PC-3 (cell line): ENCODE measurements at regions of chr6 and their contacts with region 1.

Region 1: GRCh38 chr6:83057705-83058321 is 7.8 kb downstream of the UBE3D start:
- DNase-seq: peak; percentile 67
- ATAC-seq: peak; percentile 68
- H3K4me3 ChIP-seq: no peak overlapping the region
- H3K27ac ChIP-seq: no peak overlapping the region
- H3K4me1 ChIP-seq: no peaks in the 10 kb centered on the region
- H3K27me3 ChIP-seq: no peaks in the 10 kb centered on the region
- CTCF ChIP-seq: peak; percentile 85

Region 2: GRCh38 chr6:82270881-82271645 is 786.8 kb before region 1 on chr6:
- CTCF ChIA-PET with region 1: interaction called, 11 read pairs
- POLR2A ChIA-PET with region 1: no interaction called
- intact Hi-C with region 1: loop called (anchors 1 kb)
- DNase-seq: peak; percentile 57
- ATAC-seq: no peak
- H3K4me3 ChIP-seq: no peak overlapping the region
- H3K27ac ChIP-seq: no peak overlapping the region
- H3K4me1 ChIP-seq: peaks cover 16% of the 10 kb centered on the region
- H3K27me3 ChIP-seq: no peaks in the 10 kb centered on the region
- CTCF ChIP-seq: peak; percentile 71

Region 3: DNA sequence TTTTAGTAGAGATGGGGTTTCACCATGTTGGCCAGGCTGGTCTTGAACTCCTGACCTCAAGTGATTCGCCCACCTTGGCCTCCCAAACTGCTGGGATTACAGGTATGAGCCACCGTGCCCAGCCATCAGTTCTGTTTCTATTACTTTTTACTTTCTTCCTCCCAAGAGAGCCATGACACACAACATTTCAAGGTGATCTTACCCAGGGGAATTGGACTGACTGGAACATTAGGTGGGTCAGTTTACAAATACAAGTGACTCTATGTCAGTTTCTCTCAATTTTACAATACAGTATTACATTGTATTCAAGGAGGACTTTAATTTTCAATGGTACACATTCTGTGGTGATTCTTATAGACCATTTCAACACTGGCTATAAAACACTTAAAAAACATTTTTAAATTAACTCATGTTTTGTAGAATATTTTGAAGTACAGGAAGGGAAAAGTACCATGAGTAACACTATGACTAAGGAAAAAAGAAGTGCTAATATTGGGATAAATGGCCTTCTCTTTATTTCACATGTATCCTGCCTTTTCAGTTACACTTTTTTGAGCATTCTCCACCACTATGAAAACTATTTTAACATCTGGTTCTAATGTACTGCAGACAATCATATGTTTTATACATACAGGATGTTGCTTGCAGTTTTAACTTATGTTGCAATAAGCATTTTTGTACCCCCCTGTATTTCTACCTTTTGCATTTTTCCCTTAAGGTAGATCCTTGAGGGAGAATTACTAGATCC is 685.8 kb before region 1 on chr6:
- CTCF ChIA-PET with region 1: no interaction called
- POLR2A ChIA-PET with region 1: no interaction called
- intact Hi-C with region 1: loop called (anchors 5 kb)
- DNase-seq: peak; percentile 24
- ATAC-seq: peak; percentile 48
- H3K4me3 ChIP-seq: no peak overlapping the region
- H3K27ac ChIP-seq: peak overlapping the region; percentile 39
- H3K4me1 ChIP-seq: peaks cover 17% of the 10 kb centered on the region
- H3K27me3 ChIP-seq: no peaks in the 10 kb centered on the region
- CTCF ChIP-seq: no peak

Region 4: DNA sequence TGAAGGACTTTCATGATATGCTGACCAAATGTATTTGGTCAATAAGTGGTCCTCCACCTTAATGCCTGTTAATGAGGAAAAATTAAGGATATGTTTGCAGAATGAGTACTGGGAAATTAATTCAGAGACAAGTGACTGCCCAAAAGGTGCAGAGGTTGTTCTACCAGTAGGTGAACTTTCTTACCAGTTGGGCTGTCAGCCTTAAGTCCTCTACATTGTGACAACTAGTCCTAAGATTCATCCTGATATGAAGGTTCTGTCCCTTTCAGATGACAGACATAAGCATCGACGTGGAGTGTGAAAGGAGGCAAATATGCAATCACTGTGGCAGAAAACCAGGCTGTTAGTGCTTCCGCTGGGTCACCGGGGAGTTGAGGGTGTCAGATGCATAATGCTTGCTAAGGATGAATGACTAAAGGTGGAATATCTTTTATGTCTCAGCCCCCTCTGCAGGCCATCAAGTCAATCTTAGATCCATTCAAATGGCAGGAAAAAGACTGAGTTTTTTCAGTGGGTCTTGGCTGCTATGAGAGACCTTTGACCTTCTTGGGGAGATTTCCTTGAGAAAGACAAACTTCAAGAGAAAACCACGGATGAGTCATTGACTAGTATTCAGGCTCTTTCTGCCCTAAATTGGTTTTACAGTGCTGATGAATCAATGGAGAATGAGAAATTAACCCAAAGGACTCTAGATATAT is 468.2 kb before region 1 on chr6:
- CTCF ChIA-PET with region 1: no interaction called
- POLR2A ChIA-PET with region 1: no interaction called
- intact Hi-C with region 1: loop called (anchors 2 kb)
- DNase-seq: peak; percentile 94
- ATAC-seq: peak; percentile 91
- H3K4me3 ChIP-seq: no peak overlapping the region
- H3K27ac ChIP-seq: peak overlapping the region; percentile 96
- H3K4me1 ChIP-seq: peaks cover 26% of the 10 kb centered on the region
- H3K27me3 ChIP-seq: no peaks in the 10 kb centered on the region
- CTCF ChIP-seq: peak; percentile 70

Region 5: GRCh38 chr6:82875573-82876185 is 182.1 kb before region 1 on chr6:
- CTCF ChIA-PET with region 1: no interaction called
- POLR2A ChIA-PET with region 1: no interaction called
- intact Hi-C with region 1: loop called (anchors 2 kb)
- DNase-seq: peak; percentile 96
- ATAC-seq: peak; percentile 78
- H3K4me3 ChIP-seq: no peak overlapping the region
- H3K27ac ChIP-seq: peak overlapping the region; percentile 73
- H3K4me1 ChIP-seq: peaks cover 60% of the 10 kb centered on the region
- H3K27me3 ChIP-seq: no peaks in the 10 kb centered on the region
- CTCF ChIP-seq: no peak

Region 6: GRCh38 chr6:83273596-83273995 is 215.8 kb after region 1 on chr6:
- CTCF ChIA-PET with region 1: no interaction called
- POLR2A ChIA-PET with region 1: no interaction called
- intact Hi-C with region 1: no loop called
- DNase-seq: no peak
- ATAC-seq: no peak; the same call in 1 of the 2 replicates
- H3K4me3 ChIP-seq: no peak overlapping the region
- H3K27ac ChIP-seq: no peak overlapping the region
- H3K4me1 ChIP-seq: peaks cover 16% of the 10 kb centered on the region; the same call in 1 of the 2 replicates
- H3K27me3 ChIP-seq: no peaks in the 10 kb centered on the region
- CTCF ChIP-seq: no peak